HCT116 (cell line): ENCODE measurements at regions of chr16 and their contacts with region 1.

Region 1: GRCh38 chr16:71484006-71484893 is 4.9 kb downstream of the ZNF19 start:
- DNase-seq: peak; percentile 93
- ATAC-seq: peak; percentile 92
- H3K4me3 ChIP-seq: peak overlapping the region; percentile 71 to 75
- H3K27ac ChIP-seq: peak overlapping the region; percentile 77
- H3K4me1 ChIP-seq: peaks cover 4 to 13% of the 10 kb centered on the region in 2 experiments; a peak in 3 of 4 replicates
- H3K27me3 ChIP-seq: no peaks in the 10 kb centered on the region
- CTCF ChIP-seq: no peak
- POLR2A ChIP-seq: peak; percentile 81
- RAD21 ChIP-seq: no peak; the same call in 1 of the 2 replicates

Region 2: GRCh38 chr16:71461686-71462648 is 22.3 kb before region 1 on chr16 and contains the start of gene ZNF23:
- CTCF ChIA-PET with region 1: interaction called, 5 read pairs
- POLR2A ChIA-PET with region 1: interaction called, 11 read pairs
- RAD21 ChIA-PET with region 1: no interaction called
- intact Hi-C with region 1: loop called (anchors 1 kb)
- DNase-seq: peak; percentile 57
- ATAC-seq: peak; percentile 99
- H3K4me3 ChIP-seq: peak within 1 kb of the TSS; percentile 92 to 95
- H3K27ac ChIP-seq: peak within 1 kb of the TSS; percentile 50
- H3K4me1 ChIP-seq: peaks cover 3 to 15% of the 10 kb centered on the region in 2 experiments; a peak in 3 of 4 replicates
- H3K27me3 ChIP-seq: no peaks in the 10 kb centered on the region
- CTCF ChIP-seq: 0 out of 6 replicates have a peak, but pooled peaks of 2 of the 3 experiments have one; percentile 14 to 18
- POLR2A ChIP-seq: peak; percentile 76
- RAD21 ChIP-seq: peak; percentile 50; the same call in 1 of the 2 replicates
- total RNA-seq, gene ZNF23: 11.1 TPM